ENCODE measurements at regions of chr4 and their contacts with region 1.

Region 1: DNA sequence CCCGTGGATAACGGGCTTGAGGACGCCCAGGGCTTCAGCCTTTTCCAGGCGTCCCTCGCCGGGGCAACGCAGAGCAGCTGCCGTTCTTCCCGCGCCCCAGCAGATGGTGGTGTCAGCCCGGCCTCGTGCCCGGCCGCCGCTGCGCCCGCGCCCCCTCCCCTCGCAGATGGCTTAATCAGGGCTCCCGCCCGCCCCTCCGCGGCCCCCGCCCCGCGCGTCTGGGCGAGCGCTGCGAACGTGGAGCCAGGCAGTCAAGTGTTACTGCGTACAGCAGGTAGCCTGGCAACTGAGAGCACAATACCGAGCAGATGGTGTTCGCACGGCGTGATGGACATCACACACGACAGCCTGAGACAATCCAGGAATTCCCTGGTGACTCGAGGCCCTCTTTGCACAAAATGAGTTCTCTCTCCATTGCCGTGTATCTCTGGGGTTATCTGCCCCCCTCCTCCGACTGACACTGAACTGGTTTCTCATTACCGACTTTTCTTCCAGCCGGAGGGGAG is 69.3 kb downstream of the MGST2 start:
- DNase-seq: peak; percentile 90 to 91
- ATAC-seq: peak; percentile 94 to 97 (median 94)
- H3K4me3 ChIP-seq: peak overlapping the region; percentile 34 to 66 (median 59)
- H3K27ac ChIP-seq: peak overlapping the region; percentile 78 to 93 (median 86)
- H3K4me1 ChIP-seq: peaks cover 11 to 62% (median 50%) of the 10 kb centered on the region in 9 donors
- H3K27me3 ChIP-seq: no peaks in the 10 kb centered on the region
- CTCF ChIP-seq: peak; percentile 81 to 98 (median 92)

Region 2: DNA sequence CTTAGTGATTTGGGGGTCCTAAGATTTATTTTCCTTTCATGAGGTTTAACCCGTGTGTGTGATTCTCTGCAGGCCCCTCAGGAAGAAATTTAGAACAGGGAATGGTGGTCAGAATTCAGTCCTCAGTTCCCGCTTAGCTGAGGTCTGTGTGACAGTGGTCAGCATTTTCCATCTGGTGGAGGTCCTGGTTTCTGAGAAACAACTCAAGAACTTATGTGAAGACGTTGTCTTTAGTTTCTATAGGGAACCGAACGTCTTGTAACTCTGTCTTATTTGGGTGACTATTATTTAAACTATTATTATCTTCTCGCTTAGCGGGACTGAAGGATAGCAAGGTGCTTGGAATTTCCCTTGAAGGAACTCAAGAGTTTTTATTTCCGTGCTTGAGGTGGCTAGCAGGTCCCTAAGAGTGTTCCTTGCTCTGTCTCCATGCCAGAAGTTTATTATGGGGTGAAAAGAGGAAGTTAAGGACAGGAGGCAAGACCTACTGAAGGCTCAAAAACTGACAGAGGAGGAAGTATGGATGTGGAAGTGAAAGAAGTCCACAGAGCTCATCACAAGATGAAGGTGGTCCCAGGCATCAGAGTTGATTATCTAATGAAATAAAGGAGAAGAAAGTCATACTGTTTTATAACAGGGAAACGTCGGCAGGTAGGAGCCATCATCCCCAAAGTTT is 59.9 kb before region 1 on chr4:
- intact Hi-C with region 1: no loop called
- DNase-seq: no peak
- ATAC-seq: peak in 6 of 8 donors; percentile 40 to 70 (median 53)
- H3K4me3 ChIP-seq: no peak overlapping the region
- H3K27ac ChIP-seq: peak overlapping the region in 3 of 10 donors; percentile 14 to 73 (median 18)
- H3K4me1 ChIP-seq: peaks cover 0 to 47% (median 23%) of the 10 kb centered on the region in 9 donors
- H3K27me3 ChIP-seq: no peaks in the 10 kb centered on the region
- CTCF ChIP-seq: no peak

Region 3: GRCh38 chr4:139783741-139784484 is 49.0 kb after region 1 on chr4:
- intact Hi-C with region 1: no loop called
- DNase-seq: no peak
- ATAC-seq: peak in 2 of 8 donors; percentile 23 to 35
- H3K4me3 ChIP-seq: no peak overlapping the region
- H3K27ac ChIP-seq: no peak overlapping the region
- H3K4me1 ChIP-seq: peaks cover 0 to 8% (median 0%) of the 10 kb centered on the region in 9 donors
- H3K27me3 ChIP-seq: no peaks in the 10 kb centered on the region
- CTCF ChIP-seq: no peak

Region 4: DNA sequence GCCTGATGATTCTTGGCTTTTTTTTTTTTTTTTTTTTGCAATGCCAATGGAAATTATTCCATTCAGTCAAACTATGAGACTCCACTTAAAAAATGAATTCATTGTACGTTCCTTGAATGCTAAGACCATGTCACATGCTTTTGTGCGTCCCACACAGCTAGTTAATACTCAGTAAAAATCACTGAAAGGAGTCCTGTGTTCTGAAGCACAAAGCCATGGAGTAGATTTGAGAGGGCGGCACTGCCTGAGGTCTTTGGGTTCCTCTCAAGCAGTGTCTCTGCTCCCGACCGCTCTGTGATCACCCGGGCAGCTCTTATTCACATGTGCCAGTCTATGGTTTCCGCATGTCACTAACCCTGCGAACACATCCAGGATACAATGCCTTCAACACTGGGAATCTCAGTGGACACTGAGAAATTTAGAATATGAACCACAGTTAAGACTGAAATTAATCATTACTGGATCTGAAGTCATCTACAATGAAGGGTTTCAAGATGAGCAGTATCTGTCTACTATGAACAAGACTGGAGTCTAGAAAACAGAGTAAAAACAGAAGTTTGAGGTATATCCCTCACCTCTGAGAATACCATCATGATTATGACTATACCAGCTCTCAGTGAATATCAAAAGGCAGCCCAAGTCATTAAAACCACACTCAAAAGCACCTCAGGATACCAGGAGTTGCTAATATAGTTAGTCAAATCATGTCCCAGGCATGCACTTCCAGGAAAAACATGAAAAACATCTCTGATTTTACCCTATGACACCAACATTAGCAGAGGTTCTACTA is 123.7 kb after region 1 on chr4:
- intact Hi-C with region 1: loop called in 1 of 10 experiments (anchors 5 kb)
- DNase-seq: no peak
- ATAC-seq: no peak
- H3K4me3 ChIP-seq: no peak overlapping the region
- H3K27ac ChIP-seq: no peak overlapping the region
- H3K4me1 ChIP-seq: peaks cover 0 to 9% (median 4%) of the 10 kb centered on the region in 9 donors
- H3K27me3 ChIP-seq: no peaks in the 10 kb centered on the region
- CTCF ChIP-seq: no peak

Region 5: DNA sequence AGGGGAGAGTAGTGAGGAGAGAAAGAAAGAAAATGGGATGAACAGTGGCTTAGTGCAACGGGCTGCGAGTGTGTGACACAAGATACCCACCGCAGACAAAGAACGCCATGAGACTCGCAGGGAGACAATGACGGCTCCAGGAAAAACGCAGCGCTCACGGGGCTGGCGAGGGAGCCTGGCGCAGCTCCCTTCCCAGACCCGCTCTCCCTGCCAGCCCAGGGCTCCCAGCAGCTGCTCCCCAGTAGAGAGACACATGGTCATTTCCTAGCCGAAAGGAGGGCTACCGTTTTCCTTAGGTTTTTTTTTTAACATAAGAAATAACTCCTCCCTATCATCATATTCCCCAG is 269.6 kb after region 1 on chr4:
- intact Hi-C with region 1: loop called in 3 of 10 experiments (anchors 2 to 10 kb)
- DNase-seq: peak; percentile 46 to 64
- ATAC-seq: peak; percentile 85 to 96 (median 93)
- H3K4me3 ChIP-seq: peak overlapping the region in 9 of 10 donors; percentile 38 to 55 (median 51)
- H3K27ac ChIP-seq: peak overlapping the region in 8 of 10 donors; percentile 8 to 73 (median 58)
- H3K4me1 ChIP-seq: peaks cover 6 to 40% (median 18%) of the 10 kb centered on the region in 9 donors
- H3K27me3 ChIP-seq: no peaks in the 10 kb centered on the region
- CTCF ChIP-seq: no peak

Region 6: GRCh38 chr4:140049024-140049848 is 314.3 kb after region 1 on chr4:
- intact Hi-C with region 1: loop called in 8 of 10 experiments (anchors 2 to 10 kb)
- DNase-seq: peak; percentile 15 to 56
- ATAC-seq: peak; percentile 60 to 90 (median 83)
- H3K4me3 ChIP-seq: peak overlapping the region in 9 of 10 donors; percentile 16 to 55 (median 49)
- H3K27ac ChIP-seq: peak overlapping the region in 9 of 10 donors; percentile 21 to 84 (median 66)
- H3K4me1 ChIP-seq: peaks cover 2 to 60% (median 46%) of the 10 kb centered on the region in 9 donors
- H3K27me3 ChIP-seq: no peaks in the 10 kb centered on the region
- CTCF ChIP-seq: peak in 4 of 9 donors; percentile 9 to 57 (median 50)

Region 7: GRCh38 chr4:140326395-140326993 is 591.6 kb after region 1 on chr4:
- intact Hi-C with region 1: loop called in 6 of 10 experiments (anchors 5 to 10 kb)
- DNase-seq: peak in 1 of 2 donors; percentile 28
- ATAC-seq: peak in 5 of 8 donors; percentile 67 to 85 (median 70)
- H3K4me3 ChIP-seq: no peak overlapping the region
- H3K27ac ChIP-seq: no peak overlapping the region
- H3K4me1 ChIP-seq: peaks cover 0 to 9% (median 0%) of the 10 kb centered on the region in 9 donors
- H3K27me3 ChIP-seq: no peaks in the 10 kb centered on the region
- CTCF ChIP-seq: peak; percentile 36 to 81 (median 68)

Region 8: GRCh38 chr4:140861359-140862176 is 1126.6 kb after region 1 on chr4:
- intact Hi-C with region 1: no loop called
- DNase-seq: peak in 1 of 2 donors; percentile 80
- ATAC-seq: peak; percentile 33 to 80 (median 66)
- H3K4me3 ChIP-seq: no peak overlapping the region
- H3K27ac ChIP-seq: peak overlapping the region in 3 of 10 donors; percentile 41 to 60 (median 57)
- H3K4me1 ChIP-seq: peaks cover 0 to 35% (median 6%) of the 10 kb centered on the region in 9 donors
- H3K27me3 ChIP-seq: no peaks in the 10 kb centered on the region
- CTCF ChIP-seq: peak; percentile 57 to 92 (median 78)